B cell (primary cell): ENCODE measurements at regions of chr12 and their contacts with region 1.

Region 1: GRCh38 chr12:42482445-42483237 is 106.9 kb downstream of the PRICKLE1 start:
- DNase-seq: peak; percentile 89
- ATAC-seq: peak; percentile 71
- H3K4me3 ChIP-seq: peak overlapping the region; percentile 67 to 96 (median 94)
- H3K4me3 Mint-ChIP-seq: peak overlapping the region; percentile 97
- H3K27ac ChIP-seq: peak overlapping the region; percentile 76 to 82
- H3K27ac Mint-ChIP-seq: peak overlapping the region; percentile 94
- H3K4me1 ChIP-seq: peaks cover 49 to 55% of the 10 kb centered on the region in 2 donors
- H3K4me1 Mint-ChIP-seq: peaks cover 60% of the 10 kb centered on the region
- H3K27me3 ChIP-seq: no peaks in the 10 kb centered on the region
- H3K27me3 Mint-ChIP-seq: no peaks in the 10 kb centered on the region
- CTCF ChIP-seq: peak; percentile 90

Region 2: DNA sequence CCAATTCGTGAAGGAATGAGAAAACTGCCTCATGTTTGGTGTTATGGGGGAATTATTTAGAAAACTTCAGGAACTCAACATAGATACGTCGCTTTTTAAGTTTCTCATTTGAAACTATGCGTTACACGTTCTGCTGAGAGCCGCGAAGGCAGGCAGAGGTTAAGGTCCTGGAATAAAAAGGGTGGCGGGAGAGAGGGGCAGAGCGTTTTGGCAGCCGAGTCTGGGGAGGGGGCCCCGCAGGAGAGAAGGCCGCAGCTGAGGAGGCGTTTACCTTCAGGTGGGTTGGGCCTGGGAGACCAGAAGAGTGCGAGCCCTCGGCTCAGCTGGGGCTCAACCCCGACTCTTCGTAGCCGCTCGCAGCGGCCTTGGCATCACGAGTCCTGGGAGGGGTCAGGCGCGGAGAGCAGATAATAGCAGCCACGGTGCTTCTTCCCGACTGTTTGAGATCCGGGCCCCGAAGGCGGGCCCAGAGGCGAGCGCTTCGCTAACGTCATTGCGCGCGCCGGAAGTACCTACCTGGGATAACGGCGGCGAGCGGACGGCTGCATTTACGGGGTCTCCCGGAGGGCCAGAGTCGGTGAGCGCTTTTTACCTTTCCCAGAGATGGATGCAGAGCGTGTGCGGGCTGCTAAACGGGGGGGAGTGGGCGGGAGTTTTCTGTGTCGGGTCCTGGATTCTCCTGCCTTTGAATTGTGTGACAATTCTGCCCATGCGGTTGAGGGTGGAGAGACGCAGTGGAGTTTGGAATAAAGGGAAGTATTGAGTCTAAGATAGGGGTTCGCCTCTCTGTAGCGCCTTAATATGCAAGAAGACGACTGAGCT is 156.8 kb before region 1 on chr12 and contains the starts of genes PPHLN1 and ZCRB1:
- CTCF ChIA-PET with region 1: no interaction called
- POLR2A ChIA-PET with region 1: interaction called, 5 read pairs
- intact Hi-C with region 1: loop called (anchors 2 kb)
- DNase-seq: peak; percentile 87
- ATAC-seq: peak; percentile 88
- H3K4me3 ChIP-seq: peak within 1 kb of the TSS; percentile 60 to 98 (median 84)
- H3K4me3 Mint-ChIP-seq: peak within 1 kb of the TSS; percentile 95
- H3K27ac ChIP-seq: peak within 1 kb of the TSS; percentile 64 to 92
- H3K27ac Mint-ChIP-seq: peak within 1 kb of the TSS; percentile 96
- H3K4me1 ChIP-seq: peaks cover 29 to 39% of the 10 kb centered on the region in 2 donors
- H3K4me1 Mint-ChIP-seq: peaks cover 53% of the 10 kb centered on the region
- H3K27me3 ChIP-seq: no peaks in the 10 kb centered on the region
- H3K27me3 Mint-ChIP-seq: no peaks in the 10 kb centered on the region
- CTCF ChIP-seq: no peak
- total RNA-seq, gene PPHLN1: 99.5 and 104 TPM in 2 replicates
- total RNA-seq, gene ZCRB1: 23.2 and 27.1 TPM in 2 replicates

Region 3: DNA sequence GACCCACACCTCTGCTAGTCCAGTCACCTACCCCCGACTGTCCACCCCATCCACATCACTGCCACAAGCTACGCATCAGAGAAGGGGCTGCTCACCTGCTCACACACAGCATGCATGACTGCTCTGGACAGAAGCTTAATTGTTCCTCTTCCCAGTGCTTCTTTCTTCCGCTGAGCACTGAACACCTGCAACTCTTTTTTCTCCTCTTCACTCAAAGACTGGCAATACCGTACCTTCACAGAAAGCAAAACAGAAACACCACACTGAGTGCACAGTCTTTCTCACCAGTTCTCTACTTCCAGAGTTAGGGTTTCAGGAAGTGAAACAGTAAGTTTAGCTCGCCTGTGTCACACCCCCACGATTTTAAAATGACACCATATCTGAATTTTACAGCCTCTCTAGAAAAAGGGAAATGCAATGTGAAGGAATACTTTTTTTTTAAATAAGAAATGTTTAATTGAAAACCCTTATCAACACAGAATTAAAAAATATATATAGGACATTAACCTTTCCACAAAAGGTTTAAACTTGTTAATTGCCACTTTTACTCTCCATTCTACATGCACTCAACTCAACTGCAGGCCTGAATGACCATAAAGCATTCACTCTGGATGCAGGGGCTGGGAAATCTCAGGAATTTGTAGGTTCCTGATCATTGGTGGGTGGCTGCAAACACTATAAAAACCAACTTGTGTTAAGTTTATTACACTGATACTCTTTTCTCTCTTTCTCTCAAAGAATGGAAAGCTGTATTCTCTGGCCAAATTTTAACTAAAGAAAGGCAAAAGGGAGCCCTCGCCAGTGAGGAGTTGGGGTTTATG is 13.1 kb before region 1 on chr12:
- CTCF ChIA-PET with region 1: interaction called, 111 read pairs
- POLR2A ChIA-PET with region 1: interaction called, 39 read pairs
- intact Hi-C with region 1: loop called (anchors 1 kb)
- DNase-seq: peak; percentile 93
- ATAC-seq: peak; percentile 91
- H3K4me3 ChIP-seq: peak overlapping the region; percentile 23 to 45 (median 33)
- H3K4me3 Mint-ChIP-seq: peak overlapping the region; percentile 81
- H3K27ac ChIP-seq: peak overlapping the region; percentile 81 to 87
- H3K27ac Mint-ChIP-seq: peak overlapping the region; percentile 93
- H3K4me1 ChIP-seq: peaks cover 69 to 78% of the 10 kb centered on the region in 2 donors
- H3K4me1 Mint-ChIP-seq: peaks cover 76% of the 10 kb centered on the region
- H3K27me3 ChIP-seq: no peaks in the 10 kb centered on the region
- H3K27me3 Mint-ChIP-seq: no peaks in the 10 kb centered on the region
- CTCF ChIP-seq: no peak

Region 4: DNA sequence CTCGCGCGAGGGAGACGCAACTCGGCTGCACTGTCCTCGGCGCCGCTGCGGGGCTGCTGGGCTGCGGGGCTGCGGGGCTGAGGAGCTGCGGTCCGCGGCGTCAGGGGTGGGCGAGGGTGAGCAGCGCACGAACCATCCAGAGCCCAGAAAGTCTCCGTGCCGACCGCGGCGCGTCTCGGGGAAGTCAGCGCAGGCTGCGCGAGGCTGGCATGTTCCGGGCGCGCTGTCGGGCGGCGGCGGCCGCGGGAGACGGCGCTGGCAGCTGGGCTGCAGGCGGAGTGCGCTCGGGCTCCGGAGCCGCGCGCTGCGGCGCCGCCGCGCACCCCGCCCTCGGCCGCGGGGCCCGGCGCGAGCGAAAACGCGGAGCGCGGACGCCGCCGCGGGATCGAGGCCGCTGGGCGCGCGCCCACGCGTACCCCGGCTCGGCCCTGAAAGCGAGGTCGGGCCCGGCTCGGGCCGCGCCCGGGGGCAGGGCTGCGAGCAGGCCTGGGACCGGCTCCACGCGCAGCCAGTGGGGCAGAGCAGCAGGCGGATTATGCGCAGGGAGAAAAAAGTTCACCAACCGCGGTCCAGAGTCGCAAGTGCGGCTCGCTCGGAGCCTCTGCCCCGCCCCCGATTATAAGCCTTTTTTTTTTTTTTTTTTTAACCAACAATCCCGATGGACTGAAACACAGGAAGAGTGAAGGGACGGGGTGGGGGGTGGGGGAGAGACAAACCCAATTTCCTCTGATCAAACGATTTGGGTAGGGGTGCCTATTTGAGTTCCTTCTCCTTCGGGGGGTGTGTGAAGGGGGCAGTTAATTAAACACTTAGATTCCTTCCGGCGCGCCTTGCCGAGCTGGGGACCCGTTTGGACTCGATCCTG is 107.1 kb after region 1 on chr12 and contains the start of gene PRICKLE1:
- CTCF ChIA-PET with region 1: interaction called, 8 read pairs
- POLR2A ChIA-PET with region 1: no interaction called
- intact Hi-C with region 1: loop called (anchors 2 kb)
- DNase-seq: peak; percentile 78
- ATAC-seq: peak; percentile 77
- H3K4me3 ChIP-seq: peak within 1 kb of the TSS; percentile 47 to 78 (median 67)
- H3K4me3 Mint-ChIP-seq: peak within 1 kb of the TSS; percentile 90
- H3K27ac ChIP-seq: no peak within 1 kb of the TSS
- H3K27ac Mint-ChIP-seq: peak within 1 kb of the TSS; percentile 38
- H3K4me1 ChIP-seq: peaks cover 21 to 22% of the 10 kb centered on the region in 2 donors
- H3K4me1 Mint-ChIP-seq: peaks cover 21% of the 10 kb centered on the region
- H3K27me3 ChIP-seq: peaks cover 0 to 49% (median 32%) of the 10 kb centered on the region in 4 experiments
- H3K27me3 Mint-ChIP-seq: peaks cover 55% of the 10 kb centered on the region
- CTCF ChIP-seq: no peak
- total RNA-seq, gene PRICKLE1: 21.6 and 22.5 TPM in 2 replicates

Region 5: DNA sequence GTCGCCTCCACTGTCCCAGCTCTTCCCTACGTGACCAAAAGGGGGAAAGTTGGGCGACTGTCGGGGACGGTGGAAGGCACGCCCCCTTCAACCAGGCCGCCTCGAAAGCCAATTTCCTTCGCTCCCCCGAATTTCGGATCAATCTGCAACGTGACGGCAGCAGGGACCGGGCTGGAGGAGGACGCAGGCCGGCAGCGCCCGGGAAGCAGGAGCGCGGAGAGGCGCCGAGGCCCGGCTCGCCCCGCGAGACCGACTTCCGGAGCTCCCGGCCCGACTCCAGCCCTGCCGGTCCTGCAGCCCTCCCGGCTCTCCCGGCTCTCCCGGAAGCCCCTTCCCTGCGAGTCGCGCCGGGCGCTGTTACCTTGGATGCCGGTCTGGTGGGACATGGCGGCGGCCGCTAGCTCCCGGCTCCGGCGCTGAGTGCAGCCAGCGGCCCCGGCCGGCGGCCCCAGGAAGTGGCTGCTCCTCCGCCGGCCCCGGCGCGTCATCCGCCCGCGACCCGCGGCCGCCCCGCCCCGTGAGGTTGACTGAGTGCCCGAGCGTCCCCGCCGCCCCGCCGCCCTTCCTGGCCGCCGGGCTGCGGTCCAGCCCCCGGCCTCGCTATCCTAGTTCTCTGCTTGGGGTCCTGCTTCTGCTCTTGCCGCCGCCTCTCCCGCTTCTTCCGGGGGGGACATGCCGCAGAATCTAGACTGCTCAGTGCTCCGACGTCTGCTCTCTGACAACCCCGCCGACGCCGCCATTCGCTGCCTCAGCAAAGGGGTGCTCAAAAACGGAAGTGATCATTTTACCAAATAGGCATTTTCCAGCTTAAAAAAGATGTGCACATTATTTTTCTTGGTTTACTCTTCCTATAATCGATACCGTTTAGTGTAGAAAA is 1323.5 kb after region 1 on chr12 and contains the start of gene TWF1:
- CTCF ChIA-PET with region 1: no interaction called
- POLR2A ChIA-PET with region 1: no interaction called
- intact Hi-C with region 1: loop called (anchors 5 kb)
- DNase-seq: peak; percentile 93
- ATAC-seq: peak; percentile 95
- H3K4me3 ChIP-seq: peak within 1 kb of the TSS; percentile 78 to 94 (median 85)
- H3K4me3 Mint-ChIP-seq: peak within 1 kb of the TSS; percentile 99
- H3K27ac ChIP-seq: peak within 1 kb of the TSS; percentile 87 to 96
- H3K27ac Mint-ChIP-seq: peak within 1 kb of the TSS; percentile 100
- H3K4me1 ChIP-seq: peaks cover 11 to 28% of the 10 kb centered on the region in 2 donors
- H3K4me1 Mint-ChIP-seq: peaks cover 24% of the 10 kb centered on the region
- H3K27me3 ChIP-seq: no peaks in the 10 kb centered on the region
- H3K27me3 Mint-ChIP-seq: no peaks in the 10 kb centered on the region
- CTCF ChIP-seq: peak; percentile 31
- total RNA-seq, gene TWF1: 30.0 and 34.3 TPM in 2 replicates